ENCODE measurements at regions of chr6 and their contacts with region 1.

Region 1: DNA sequence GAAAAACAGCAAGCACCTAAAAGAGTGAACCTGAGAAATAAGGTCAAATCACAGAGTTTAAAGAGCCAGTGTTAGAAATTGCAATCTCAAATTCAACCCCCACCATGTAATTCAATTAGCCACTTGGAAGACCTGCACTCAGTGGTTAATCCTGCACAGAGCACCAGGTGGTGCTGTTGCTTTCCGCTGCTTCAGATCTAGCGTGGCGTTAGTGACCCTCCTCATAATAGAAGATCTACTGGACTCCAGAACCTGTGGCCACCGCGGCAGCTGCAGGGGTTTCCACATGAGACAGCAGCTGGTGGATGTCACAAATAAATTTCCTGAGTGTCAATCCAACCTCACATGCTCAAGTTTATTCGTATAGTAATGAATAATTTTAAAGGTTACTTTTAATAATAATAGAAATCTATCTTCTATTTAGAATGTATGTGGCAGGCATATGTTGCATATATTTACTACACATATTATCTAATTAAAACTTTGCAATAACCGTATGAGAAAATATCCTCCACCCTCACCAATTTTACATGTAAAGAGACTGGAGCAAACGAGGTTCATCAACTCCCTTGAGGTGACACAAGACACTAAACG is 84.4 kb downstream of the SYNE1 start:
- DNase-seq: peak; percentile 77
- ATAC-seq: peak; percentile 99
- H3K4me3 ChIP-seq: no peak overlapping the region
- H3K27ac ChIP-seq: no peak overlapping the region
- H3K4me1 ChIP-seq: no peaks in the 10 kb centered on the region
- H3K27me3 ChIP-seq: no peaks in the 10 kb centered on the region
- CTCF ChIP-seq: peak; percentile 91
- POLR2A ChIP-seq: no peak
- RAD21 ChIP-seq: peak; percentile 87

Region 2: DNA sequence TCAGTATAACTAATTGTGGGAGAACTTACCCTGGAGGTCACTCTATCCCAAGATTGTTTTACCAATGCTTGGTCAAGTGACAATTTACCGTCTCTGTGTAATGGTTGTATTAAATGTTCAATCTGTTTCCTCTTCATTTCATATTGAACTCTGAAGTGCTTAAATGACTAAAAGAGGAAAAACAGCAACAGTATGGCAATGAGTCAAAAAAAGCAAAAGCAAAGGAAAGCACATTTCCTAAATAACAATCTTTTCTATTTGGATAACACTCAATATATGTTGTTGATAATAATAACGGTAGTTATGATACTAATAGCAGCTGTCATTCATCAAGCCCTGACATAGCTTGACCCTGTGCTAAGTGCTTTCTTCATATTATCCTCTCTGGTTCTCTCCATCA is 67.9 kb before region 1 on chr6:
- CTCF ChIA-PET with region 1: interaction called, 11 read pairs
- POLR2A ChIA-PET with region 1: no interaction called
- dilution Hi-C with region 1: no loop called
- in situ Hi-C with region 1: no loop called
- intact Hi-C with region 1: loop called (anchors 2 kb)
- DNase-seq: no peak
- ATAC-seq: no peak
- H3K4me3 ChIP-seq: no peak overlapping the region
- H3K27ac ChIP-seq: no peak overlapping the region
- H3K4me1 ChIP-seq: no peaks in the 10 kb centered on the region
- H3K27me3 ChIP-seq: no peaks in the 10 kb centered on the region
- CTCF ChIP-seq: no peak
- POLR2A ChIP-seq: no peak
- RAD21 ChIP-seq: no peak

Region 3: DNA sequence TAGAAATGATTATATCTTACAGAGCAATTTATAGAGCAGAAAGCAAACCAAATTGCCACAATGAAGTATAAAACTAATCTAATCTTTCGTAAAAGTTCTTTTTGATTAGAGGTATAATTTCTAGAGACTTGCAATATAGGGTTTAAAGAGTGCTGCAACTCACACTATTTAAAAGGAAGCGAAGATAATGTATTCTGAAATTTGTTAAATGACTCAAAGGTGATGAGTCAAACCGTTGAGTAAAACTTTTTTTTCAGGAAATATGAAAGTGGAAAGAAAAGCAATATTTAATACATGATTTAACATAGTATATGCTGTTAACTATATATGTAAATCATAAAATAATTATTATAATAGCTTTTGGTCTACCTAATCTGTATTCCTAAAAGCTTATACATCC is 49.2 kb before region 1 on chr6:
- CTCF ChIA-PET with region 1: no interaction called
- POLR2A ChIA-PET with region 1: no interaction called
- dilution Hi-C with region 1: no loop called
- in situ Hi-C with region 1: no loop called
- intact Hi-C with region 1: no loop called
- DNase-seq: peak; percentile 26
- ATAC-seq: no peak
- H3K4me3 ChIP-seq: no peak overlapping the region
- H3K27ac ChIP-seq: no peak overlapping the region
- H3K4me1 ChIP-seq: no peaks in the 10 kb centered on the region
- H3K27me3 ChIP-seq: no peaks in the 10 kb centered on the region
- CTCF ChIP-seq: no peak
- POLR2A ChIP-seq: no peak
- RAD21 ChIP-seq: no peak

Region 4: GRCh38 chr6:152625213-152625612 is 72.5 kb after region 1 on chr6:
- CTCF ChIA-PET with region 1: no interaction called
- POLR2A ChIA-PET with region 1: no interaction called
- dilution Hi-C with region 1: no loop called
- in situ Hi-C with region 1: no loop called
- intact Hi-C with region 1: no loop called
- DNase-seq: no peak
- ATAC-seq: no peak
- H3K4me3 ChIP-seq: no peak overlapping the region
- H3K27ac ChIP-seq: no peak overlapping the region
- H3K4me1 ChIP-seq: no peaks in the 10 kb centered on the region
- H3K27me3 ChIP-seq: no peaks in the 10 kb centered on the region
- CTCF ChIP-seq: no peak
- POLR2A ChIP-seq: no peak
- RAD21 ChIP-seq: no peak

Region 5: GRCh38 chr6:152642989-152643388 is 90.3 kb after region 1 on chr6:
- CTCF ChIA-PET with region 1: interaction called, 17 read pairs
- POLR2A ChIA-PET with region 1: no interaction called
- dilution Hi-C with region 1: no loop called
- in situ Hi-C with region 1: no loop called
- intact Hi-C with region 1: loop called (anchors 1 kb)
- DNase-seq: peak; percentile 55
- ATAC-seq: peak; percentile 98
- H3K4me3 ChIP-seq: no peak overlapping the region
- H3K27ac ChIP-seq: no peak overlapping the region
- H3K4me1 ChIP-seq: no peaks in the 10 kb centered on the region; the same call in 1 of the 2 replicates
- H3K27me3 ChIP-seq: no peaks in the 10 kb centered on the region
- CTCF ChIP-seq: peak; percentile 53
- POLR2A ChIP-seq: no peak
- RAD21 ChIP-seq: peak; percentile 61

Region 6: GRCh38 chr6:152750694-152751093 is 198.0 kb after region 1 on chr6 and contains the start of gene VIP:
- CTCF ChIA-PET with region 1: no interaction called
- POLR2A ChIA-PET with region 1: no interaction called
- dilution Hi-C with region 1: no loop called
- in situ Hi-C with region 1: no loop called
- intact Hi-C with region 1: loop called (anchors 5 kb)
- DNase-seq: peak; percentile 42
- ATAC-seq: peak; percentile 81
- H3K4me3 ChIP-seq: no peak within 1 kb of the TSS
- H3K27ac ChIP-seq: no peak within 1 kb of the TSS
- H3K4me1 ChIP-seq: no peaks in the 10 kb centered on the region
- H3K27me3 ChIP-seq: no peaks in the 10 kb centered on the region
- CTCF ChIP-seq: no peak
- POLR2A ChIP-seq: no peak
- RAD21 ChIP-seq: no peak
- total RNA-seq, gene VIP: not detected in 2 replicates

Region 7: GRCh38 chr6:152948150-152948768 is 395.5 kb after region 1 on chr6:
- CTCF ChIA-PET with region 1: no interaction called
- POLR2A ChIA-PET with region 1: no interaction called
- dilution Hi-C with region 1: no loop called
- in situ Hi-C with region 1: no loop called
- intact Hi-C with region 1: loop called (anchors 5 kb)
- DNase-seq: peak; percentile 52
- ATAC-seq: peak; percentile 81
- H3K4me3 ChIP-seq: no peak overlapping the region
- H3K27ac ChIP-seq: no peak overlapping the region
- H3K4me1 ChIP-seq: no peaks in the 10 kb centered on the region
- H3K27me3 ChIP-seq: no peaks in the 10 kb centered on the region
- CTCF ChIP-seq: peak; percentile 70
- POLR2A ChIP-seq: no peak
- RAD21 ChIP-seq: peak; percentile 78

Measured in IMR-90 (cell line).